ENCODE measurements at regions of chr12 and their contacts with region 1.

Region 1: GRCh38 chr12:6335451-6336078 is 6.3 kb downstream of the TNFRSF1A start:
- DNase-seq: no peak
- ATAC-seq: peak; percentile 48
- H3K4me3 ChIP-seq: peak overlapping the region; percentile 32 to 64
- H3K27ac ChIP-seq: peak overlapping the region; percentile 99
- H3K4me1 ChIP-seq: peaks cover 55 to 78% of the 10 kb centered on the region in 2 experiments
- H3K27me3 ChIP-seq: no peaks in the 10 kb centered on the region
- CTCF ChIP-seq: peak in 2 of 3 experiments; percentile 50 to 61; a peak in 4 of 6 replicates
- POLR2A ChIP-seq: no peak
- RAD21 ChIP-seq: no peak

Region 2: GRCh38 chr12:6323340-6323994 is 12.1 kb before region 1 on chr12:
- CTCF ChIA-PET with region 1: interaction called, 15 read pairs
- POLR2A ChIA-PET with region 1: interaction called, 24 read pairs
- RAD21 ChIA-PET with region 1: no interaction called
- intact Hi-C with region 1: no loop called
- DNase-seq: peak; percentile 70
- ATAC-seq: peak; percentile 80
- H3K4me3 ChIP-seq: no peak overlapping the region
- H3K27ac ChIP-seq: peak overlapping the region; percentile 71
- H3K4me1 ChIP-seq: peaks cover 12 to 37% of the 10 kb centered on the region in 2 experiments
- H3K27me3 ChIP-seq: no peaks in the 10 kb centered on the region
- CTCF ChIP-seq: peak; percentile 66 to 97 (median 70)
- POLR2A ChIP-seq: no peak
- RAD21 ChIP-seq: peak; percentile 68

Region 3: DNA sequence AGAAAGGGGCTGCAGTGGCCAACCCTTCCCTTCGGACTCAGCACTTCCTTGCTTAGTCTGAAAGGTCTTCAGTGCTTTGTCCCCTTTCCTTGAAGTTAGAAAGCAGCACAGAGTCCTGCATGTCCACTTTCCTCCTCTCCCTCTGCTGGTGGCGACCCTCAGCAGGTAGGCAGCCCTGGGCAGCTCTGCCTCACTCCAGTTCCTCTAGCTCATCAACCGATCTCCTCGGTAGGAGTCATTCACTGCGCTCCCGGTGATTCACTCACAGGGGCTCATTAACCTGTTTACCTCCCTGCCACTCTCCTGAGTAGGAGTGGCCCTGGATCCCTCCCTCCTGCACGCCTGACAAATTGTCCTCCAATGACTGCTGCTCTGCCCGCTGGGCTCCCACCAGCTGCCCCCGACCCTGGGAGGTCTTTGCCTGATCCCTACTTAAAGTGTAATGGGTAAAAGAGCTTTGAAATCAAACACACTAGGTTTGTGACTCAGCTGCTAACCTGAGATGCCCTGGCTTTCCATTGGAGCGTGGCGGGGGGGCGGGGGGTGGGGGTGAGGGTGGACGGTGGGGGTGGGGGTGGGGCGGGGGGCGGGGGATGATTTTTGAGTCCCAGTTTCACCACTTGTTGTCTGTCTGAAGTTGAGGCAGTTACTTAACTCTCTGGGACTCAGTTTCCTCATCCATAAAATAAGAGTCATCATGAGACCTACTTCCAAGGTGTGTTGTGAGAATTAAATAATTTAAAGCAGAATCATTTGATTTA is 35.6 kb after region 1 on chr12:
- CTCF ChIA-PET with region 1: interaction called, 6 read pairs
- POLR2A ChIA-PET with region 1: interaction called, 29 read pairs
- RAD21 ChIA-PET with region 1: interaction called in 1 of 2 experiments, 4 read pairs
- intact Hi-C with region 1: loop called (anchors 1 kb)
- DNase-seq: peak; percentile 95
- ATAC-seq: peak; percentile 66
- H3K4me3 ChIP-seq: peak overlapping the region; percentile 20 to 58
- H3K27ac ChIP-seq: peak overlapping the region; percentile 100
- H3K4me1 ChIP-seq: peaks cover 79 to 99% of the 10 kb centered on the region in 2 experiments
- H3K27me3 ChIP-seq: no peaks in the 10 kb centered on the region
- CTCF ChIP-seq: 0 out of 6 replicates have a peak, but pooled peaks of 1 of the 3 experiments have one; percentile 9
- POLR2A ChIP-seq: peak; percentile 40
- RAD21 ChIP-seq: no peak

Region 4: DNA sequence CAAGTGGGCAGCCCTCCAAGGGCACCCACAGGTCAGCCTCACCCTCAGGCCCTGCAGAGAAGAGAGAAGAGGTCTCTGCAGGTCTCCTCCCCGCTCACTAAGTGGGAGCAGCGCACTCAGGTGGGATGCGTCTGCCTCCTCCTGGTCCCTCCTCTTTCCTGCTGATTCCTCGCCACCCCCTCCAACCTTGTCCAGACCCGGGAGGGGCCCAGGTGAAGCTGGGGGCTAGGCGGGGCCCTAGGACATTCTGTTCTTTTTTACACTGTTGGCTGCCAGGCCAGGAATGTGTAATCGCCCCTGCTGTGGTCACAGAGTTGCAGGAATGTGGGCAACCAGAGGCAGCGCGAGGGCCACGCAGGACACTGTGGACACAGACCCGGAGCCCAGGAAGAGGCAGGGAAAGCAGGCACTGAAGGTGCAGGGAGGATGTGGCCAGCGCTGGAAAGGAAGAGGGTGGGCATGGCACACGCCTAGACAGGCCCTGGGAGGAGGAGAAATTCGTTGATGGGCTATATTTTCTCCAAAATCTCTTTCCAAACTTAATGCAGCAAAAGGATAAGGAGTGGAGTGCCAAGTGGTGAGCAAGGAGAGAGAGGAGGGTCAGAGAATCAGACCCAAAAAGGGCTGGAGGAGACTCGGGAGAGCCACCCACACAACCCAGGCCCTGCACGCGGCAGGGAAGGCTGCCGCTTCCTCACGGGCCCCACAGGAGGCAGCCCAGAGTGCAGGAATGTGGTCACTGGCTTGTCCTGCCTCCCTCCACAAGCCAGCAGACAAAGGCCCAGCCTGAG is 40.7 kb after region 1 on chr12:
- CTCF ChIA-PET with region 1: interaction called, 6 read pairs
- POLR2A ChIA-PET with region 1: interaction called, 29 read pairs
- RAD21 ChIA-PET with region 1: interaction called in 1 of 2 experiments, 7 read pairs
- intact Hi-C with region 1: loop called (anchors 1 kb)
- DNase-seq: no peak
- ATAC-seq: peak; percentile 59
- H3K4me3 ChIP-seq: peak overlapping the region; percentile 54 to 58
- H3K27ac ChIP-seq: peak overlapping the region; percentile 100
- H3K4me1 ChIP-seq: peaks cover 68 to 75% of the 10 kb centered on the region in 2 experiments
- H3K27me3 ChIP-seq: no peaks in the 10 kb centered on the region
- CTCF ChIP-seq: peak in 2 of 3 experiments; percentile 51 to 63; a peak in 4 of 6 replicates
- POLR2A ChIP-seq: peak; percentile 36
- RAD21 ChIP-seq: no peak

Region 5: DNA sequence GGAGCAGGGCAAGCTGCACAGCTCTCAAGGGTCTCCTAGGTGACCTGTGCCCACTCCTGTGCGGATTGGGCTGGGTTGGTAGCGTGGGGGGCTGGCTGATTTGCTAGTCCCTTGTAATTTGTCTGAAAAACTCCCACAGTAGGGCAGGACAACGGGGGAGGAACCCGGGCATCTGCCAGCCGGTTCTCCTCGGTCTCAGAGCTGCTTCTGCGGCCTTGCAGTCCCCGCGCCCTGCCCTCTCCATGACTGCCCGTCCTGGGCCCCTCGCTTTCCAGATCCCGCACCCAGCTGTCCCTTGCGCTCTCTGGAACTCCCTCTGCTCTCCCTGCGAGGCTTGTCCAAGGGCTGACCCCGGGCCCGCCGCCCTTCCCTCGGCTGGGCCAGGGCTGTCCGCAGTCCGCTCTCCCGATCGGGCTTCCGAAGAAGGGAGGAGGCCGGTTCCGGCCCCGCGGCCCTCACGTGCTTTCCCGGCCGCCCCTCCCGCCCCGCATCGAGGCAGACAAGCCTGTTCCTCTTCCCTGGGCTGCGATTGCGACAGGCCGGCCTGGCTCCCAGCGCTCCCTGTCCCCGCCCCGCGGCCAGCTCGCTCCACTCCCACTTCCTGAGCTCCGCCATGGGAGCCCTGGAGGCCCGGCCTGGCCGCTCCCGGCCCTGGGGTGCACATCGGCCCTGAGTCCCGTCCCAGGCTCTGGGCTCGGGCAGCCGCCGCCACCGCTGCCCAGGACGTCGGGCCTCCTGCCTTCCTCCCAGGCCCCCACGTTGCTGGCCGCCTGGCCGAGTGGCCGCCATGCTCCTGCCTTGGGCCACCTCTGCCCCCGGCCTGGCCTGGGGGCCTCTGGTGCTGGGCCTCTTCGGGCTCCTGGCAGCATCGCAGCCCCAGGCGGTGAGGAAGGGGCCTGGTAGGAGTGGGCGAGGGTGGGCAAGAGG is 48.3 kb after region 1 on chr12 and contains the start of gene LTBR:
- CTCF ChIA-PET with region 1: no interaction called
- POLR2A ChIA-PET with region 1: interaction called, 3 read pairs
- RAD21 ChIA-PET with region 1: interaction called in 1 of 2 experiments, 3 read pairs
- intact Hi-C with region 1: loop called (anchors 1 kb)
- DNase-seq: no peak
- ATAC-seq: peak; percentile 84
- H3K4me3 ChIP-seq: peak within 1 kb of the TSS; percentile 77 to 87
- H3K27ac ChIP-seq: peak within 1 kb of the TSS; percentile 99
- H3K4me1 ChIP-seq: peaks cover 19 to 40% of the 10 kb centered on the region in 2 experiments
- H3K27me3 ChIP-seq: no peaks in the 10 kb centered on the region
- CTCF ChIP-seq: no peak
- POLR2A ChIP-seq: no peak
- RAD21 ChIP-seq: no peak
- total RNA-seq, gene LTBR: 128 TPM

Region 6: DNA sequence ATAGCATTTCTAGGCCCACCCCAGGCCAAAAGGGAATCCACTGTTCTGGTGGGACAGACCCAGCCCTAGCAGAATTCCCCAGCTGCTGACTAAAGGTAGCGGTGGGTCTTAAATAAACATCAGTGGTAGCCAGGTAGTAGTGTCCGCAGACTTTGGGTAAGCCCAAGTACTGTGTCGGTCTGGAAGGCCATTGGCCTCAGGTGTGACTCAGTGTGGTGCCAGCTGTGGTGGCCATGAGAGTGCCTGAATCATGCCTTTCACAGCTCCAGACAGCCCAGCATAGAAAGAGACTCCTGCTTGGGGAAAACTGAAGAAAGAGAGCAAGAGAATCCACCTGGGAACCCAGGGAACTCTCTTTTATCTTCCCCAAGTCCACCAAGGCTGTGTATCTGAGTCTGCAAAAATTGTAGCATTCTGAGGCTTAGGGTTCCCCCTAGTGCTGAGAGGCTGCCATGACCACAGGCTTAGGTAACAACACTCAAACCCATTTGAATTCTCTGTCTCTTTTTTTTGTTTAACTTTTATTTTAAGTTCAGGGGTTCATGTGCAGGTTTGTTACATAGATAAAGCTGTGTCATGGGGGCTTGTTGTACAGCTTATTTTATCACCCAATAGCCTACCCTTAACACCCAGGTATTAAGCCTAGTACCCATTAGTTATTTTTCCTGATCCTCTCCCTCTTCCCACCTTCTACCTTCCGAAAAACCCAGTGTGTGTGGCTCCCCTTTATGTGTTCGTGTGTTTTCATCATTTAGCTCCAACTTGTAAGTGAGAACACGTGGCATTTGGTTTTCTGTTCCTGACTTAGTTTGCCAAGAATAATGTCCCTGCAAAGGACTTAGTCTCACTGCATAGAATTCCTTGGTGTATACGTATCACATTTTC is 1125.1 kb after region 1 on chr12:
- CTCF ChIA-PET with region 1: no interaction called
- POLR2A ChIA-PET with region 1: no interaction called
- RAD21 ChIA-PET with region 1: no interaction called
- intact Hi-C with region 1: no loop called
- DNase-seq: peak; percentile 34
- ATAC-seq: peak; percentile 95
- H3K4me3 ChIP-seq: no peak overlapping the region
- H3K27ac ChIP-seq: no peak overlapping the region
- H3K4me1 ChIP-seq: no peaks in the 10 kb centered on the region
- H3K27me3 ChIP-seq: no peaks in the 10 kb centered on the region
- CTCF ChIP-seq: peak; percentile 79 to 92 (median 89); a peak in 5 of 6 replicates
- POLR2A ChIP-seq: no peak
- RAD21 ChIP-seq: peak; percentile 91

Measured in HCT116 (cell line).